OCI-LY7 (cell line): ENCODE measurements at regions of chr13 and their contacts with region 1.

Region 1: GRCh38 chr13:46184277-46184699 is 2.3 kb upstream of the LCP1 start:
- DNase-seq: peak; percentile 87
- H3K4me3 ChIP-seq: peak overlapping the region; percentile 92
- H3K27ac ChIP-seq: peak overlapping the region; percentile 92
- H3K4me1 ChIP-seq: peaks cover 32% of the 10 kb centered on the region
- CTCF ChIP-seq: peak; percentile 99

Region 2: GRCh38 chr13:45055902-45056648 is 1128.2 kb before region 1 on chr13:
- CTCF ChIA-PET with region 1: no interaction called
- POLR2A ChIA-PET with region 1: no interaction called
- intact Hi-C with region 1: no loop called
- DNase-seq: no peak
- H3K4me3 ChIP-seq: no peak overlapping the region
- H3K27ac ChIP-seq: no peak overlapping the region
- H3K4me1 ChIP-seq: no peaks in the 10 kb centered on the region
- CTCF ChIP-seq: no peak

Region 3: GRCh38 chr13:46052319-46053161 is 131.7 kb before region 1 on chr13 and contains the start of gene ZC3H13:
- CTCF ChIA-PET with region 1: no interaction called
- POLR2A ChIA-PET with region 1: interaction called, 3 read pairs
- intact Hi-C with region 1: loop called (anchors 1 kb)
- DNase-seq: peak; percentile 95
- H3K4me3 ChIP-seq: peak within 1 kb of the TSS; percentile 93
- H3K27ac ChIP-seq: peak within 1 kb of the TSS; percentile 91
- H3K4me1 ChIP-seq: peaks cover 29% of the 10 kb centered on the region
- CTCF ChIP-seq: peak; percentile 54
- total RNA-seq, gene ZC3H13: 27.2 and 28.2 TPM in 2 replicates

Region 4: DNA sequence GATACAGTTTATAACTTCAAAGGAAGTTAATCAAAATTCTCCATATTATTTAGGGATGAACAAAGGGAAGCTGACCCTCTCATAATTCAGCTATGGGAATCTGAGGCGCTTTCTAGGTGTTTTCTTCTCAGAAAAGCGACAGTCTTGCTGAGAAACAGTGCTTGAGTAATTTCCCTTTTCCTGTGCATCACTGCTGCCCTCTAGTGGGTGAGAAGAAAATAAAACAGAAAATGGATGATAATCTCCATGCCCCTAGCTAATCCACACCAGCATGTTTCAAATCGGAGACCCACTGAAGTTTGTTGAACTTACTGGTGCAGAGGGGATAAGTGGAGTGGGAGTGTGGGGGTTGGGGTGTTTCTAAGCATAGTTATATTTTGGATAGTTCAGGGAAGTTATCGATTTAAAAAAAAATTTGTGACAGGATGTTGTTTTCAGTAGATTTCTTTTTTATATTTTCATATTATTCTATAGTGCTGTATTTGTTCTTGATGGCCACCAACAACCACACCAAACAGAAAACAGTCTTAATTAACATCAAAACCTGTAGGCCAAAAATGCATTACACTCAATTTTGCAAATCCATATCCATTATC is 23.7 kb before region 1 on chr13:
- CTCF ChIA-PET with region 1: no interaction called
- POLR2A ChIA-PET with region 1: interaction called, 30 read pairs
- intact Hi-C with region 1: loop called (anchors 2 kb)
- DNase-seq: peak; percentile 69
- H3K4me3 ChIP-seq: no peak overlapping the region
- H3K27ac ChIP-seq: no peak overlapping the region
- H3K4me1 ChIP-seq: peaks cover 32% of the 10 kb centered on the region
- CTCF ChIP-seq: peak; percentile 93

Region 5: DNA sequence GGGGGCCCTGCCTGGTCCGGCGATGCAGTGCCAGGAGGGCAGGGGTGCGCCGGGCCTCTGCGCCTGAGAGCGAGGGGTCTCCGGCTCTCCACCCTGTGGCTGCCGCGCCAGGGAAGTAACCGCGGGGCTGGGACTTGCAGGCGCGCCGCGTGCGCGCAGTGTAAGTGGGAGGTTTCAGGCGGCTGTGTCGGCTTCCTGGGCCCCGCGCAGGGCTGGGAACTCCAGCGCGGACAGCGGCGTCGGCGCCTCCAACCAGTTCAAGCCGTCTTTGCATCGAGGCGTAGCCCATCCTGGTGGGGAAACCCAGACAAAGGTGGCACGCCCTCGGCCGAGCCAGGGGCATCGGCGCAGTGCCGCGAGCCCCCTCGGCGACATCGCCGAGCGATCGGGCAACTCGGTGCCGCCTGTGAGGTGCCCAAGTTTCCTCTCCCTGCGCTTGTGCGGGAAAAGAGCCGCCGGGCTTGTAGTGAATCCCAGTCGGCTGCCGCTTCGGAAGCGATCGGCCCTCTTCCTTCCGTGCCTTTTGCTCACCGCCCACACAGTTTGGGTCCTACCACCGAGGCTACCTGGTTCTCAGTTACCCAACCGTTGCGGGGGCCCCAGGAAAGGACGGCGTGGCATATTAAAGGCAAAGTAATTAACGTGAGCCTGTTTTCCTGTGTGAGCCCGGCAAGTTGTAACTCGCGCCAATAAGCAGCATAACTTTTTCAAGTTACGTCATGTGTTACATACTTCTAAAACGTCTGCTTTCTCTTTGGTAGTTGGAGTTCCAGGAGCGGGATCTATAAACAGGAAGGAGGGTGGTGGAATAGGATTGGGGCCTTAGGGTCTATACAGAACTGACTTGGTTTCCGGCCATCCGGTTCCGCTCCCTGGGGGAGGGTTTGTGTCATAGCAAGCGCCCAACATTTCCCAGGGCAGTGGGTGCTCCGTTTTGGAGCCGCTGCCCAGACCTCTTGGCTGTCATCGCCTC is 369.9 kb after region 1 on chr13:
- CTCF ChIA-PET with region 1: no interaction called
- POLR2A ChIA-PET with region 1: no interaction called
- intact Hi-C with region 1: loop called (anchors 5 kb)
- DNase-seq: peak; percentile 82
- H3K4me3 ChIP-seq: peak overlapping the region; percentile 86
- H3K27ac ChIP-seq: peak overlapping the region; percentile 74
- H3K4me1 ChIP-seq: peaks cover 40% of the 10 kb centered on the region
- CTCF ChIP-seq: 0 out of 2 replicates have a peak, but pooled peaks have one; percentile 10

Region 6: GRCh38 chr13:46607768-46608564 is 423.7 kb after region 1 on chr13:
- CTCF ChIA-PET with region 1: no interaction called
- POLR2A ChIA-PET with region 1: no interaction called
- intact Hi-C with region 1: no loop called
- DNase-seq: no peak
- H3K4me3 ChIP-seq: no peak overlapping the region
- H3K27ac ChIP-seq: no peak overlapping the region
- H3K4me1 ChIP-seq: peaks cover 66% of the 10 kb centered on the region
- CTCF ChIP-seq: no peak